ENCODE measurements at regions of chr5 and their contacts with region 1.

Region 1: DNA sequence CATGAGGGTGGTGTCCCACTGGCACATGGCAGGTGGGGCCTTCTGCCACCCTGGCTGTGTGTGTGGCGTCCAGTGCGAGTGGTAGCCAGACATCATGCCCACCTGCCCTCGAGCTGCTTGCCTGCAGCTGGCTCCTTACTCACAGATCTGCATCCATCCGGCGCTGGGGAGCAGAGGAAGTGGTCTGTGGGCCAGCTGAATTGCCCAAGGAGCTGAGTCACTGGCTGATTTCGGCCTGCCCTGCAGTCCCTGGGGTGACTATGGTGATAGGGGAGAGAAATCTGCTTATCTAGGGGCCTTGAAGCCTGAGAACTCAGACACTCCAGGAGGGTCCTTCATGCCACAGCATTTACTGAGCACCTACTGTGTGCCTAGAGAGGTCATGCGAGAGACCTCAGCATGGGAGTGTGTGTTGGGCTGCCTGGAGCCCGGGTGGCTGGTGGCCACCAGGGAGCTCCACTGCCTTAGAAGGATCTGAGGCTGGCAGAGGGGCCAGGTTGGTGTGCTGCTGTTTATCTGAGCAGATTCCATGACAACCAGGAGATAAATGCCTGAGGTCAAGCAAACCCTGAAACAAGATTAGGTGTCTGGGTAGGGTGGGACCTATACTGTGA is 57.1 kb downstream of the SLC22A5 start:
- DNase-seq: peak; percentile 90
- H3K4me3 Mint-ChIP-seq: peak overlapping the region; percentile 77
- H3K27ac Mint-ChIP-seq: peak overlapping the region; percentile 99
- H3K4me1 Mint-ChIP-seq: peaks cover 98% of the 10 kb centered on the region
- H3K27me3 Mint-ChIP-seq: no peaks in the 10 kb centered on the region

Region 2: DNA sequence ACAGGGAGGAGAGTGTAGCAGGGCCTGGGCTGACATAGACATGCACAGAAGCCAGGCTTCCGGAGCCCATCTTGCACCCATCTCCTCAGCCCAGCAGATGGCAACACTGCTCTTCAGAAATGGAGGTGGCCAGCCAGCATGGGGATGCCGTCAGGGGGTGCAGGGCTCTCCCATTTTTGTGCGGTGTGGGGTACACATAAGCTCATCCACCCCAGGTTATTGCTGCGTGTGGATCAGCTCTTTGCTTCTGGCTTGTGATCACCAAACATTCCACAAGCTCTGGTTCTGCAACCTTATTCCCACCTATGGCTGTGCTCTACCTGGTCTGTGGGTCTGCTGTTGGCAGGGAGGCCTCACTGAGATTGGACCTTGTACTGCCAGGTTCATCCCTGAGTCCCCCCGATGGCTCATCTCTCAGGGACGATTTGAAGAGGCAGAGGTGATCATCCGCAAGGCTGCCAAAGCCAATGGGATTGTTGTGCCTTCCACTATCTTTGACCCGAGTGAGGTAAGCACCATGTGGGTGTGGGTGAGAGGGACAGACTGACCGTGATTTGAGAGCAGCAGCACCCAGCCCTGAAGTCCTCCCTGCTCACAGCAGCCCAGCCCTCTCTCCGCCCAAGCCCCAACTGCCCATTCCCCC is 39.9 kb before region 1 on chr5:
- CTCF ChIA-PET with region 1: interaction called, 10 read pairs
- POLR2A ChIA-PET with region 1: interaction called, 4 read pairs
- DNase-seq: peak; percentile 83
- H3K4me3 Mint-ChIP-seq: no peak overlapping the region
- H3K27ac Mint-ChIP-seq: peak overlapping the region; percentile 31
- H3K4me1 Mint-ChIP-seq: peaks cover 52% of the 10 kb centered on the region
- H3K27me3 Mint-ChIP-seq: no peaks in the 10 kb centered on the region

Region 3: DNA sequence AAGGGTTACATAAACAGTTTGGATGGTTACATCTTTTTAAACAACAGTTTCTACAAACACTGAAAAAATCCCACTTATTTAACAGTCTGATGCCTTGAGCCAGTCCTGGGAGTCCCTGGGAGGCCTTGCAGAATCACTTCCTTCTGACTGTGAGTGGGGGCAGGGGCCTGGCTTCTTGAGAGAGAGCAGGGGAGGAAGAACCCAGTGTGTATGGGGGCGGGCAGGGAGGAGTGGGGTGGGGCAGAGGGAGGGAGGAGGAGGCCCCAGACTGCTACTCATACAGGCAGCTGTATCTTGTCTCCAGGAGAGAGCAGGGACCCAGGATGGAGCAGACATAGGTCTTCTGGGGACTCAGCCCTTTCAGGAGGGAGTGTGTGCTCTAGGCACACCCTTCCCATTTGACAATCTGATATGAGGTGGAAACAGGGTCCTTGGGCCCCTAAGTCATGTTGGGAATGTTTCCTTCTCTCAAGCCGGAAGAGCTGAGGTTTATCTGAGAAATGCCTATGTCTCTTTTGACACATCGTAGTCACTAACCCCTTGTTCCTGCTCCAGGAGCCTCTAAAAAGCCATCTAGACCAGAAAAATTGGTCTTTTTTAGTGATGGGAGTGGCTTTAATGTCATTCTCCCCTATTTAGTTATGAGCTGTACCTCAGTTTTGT is 11.1 kb after region 1 on chr5:
- CTCF ChIA-PET with region 1: interaction called, 44 read pairs
- POLR2A ChIA-PET with region 1: interaction called, 76 read pairs
- DNase-seq: peak; percentile 72
- H3K4me3 Mint-ChIP-seq: peak overlapping the region; percentile 54
- H3K27ac Mint-ChIP-seq: peak overlapping the region; percentile 87
- H3K4me1 Mint-ChIP-seq: peaks cover 82% of the 10 kb centered on the region
- H3K27me3 Mint-ChIP-seq: no peaks in the 10 kb centered on the region

Region 4: GRCh38 chr5:132456296-132457001 is 29.8 kb after region 1 on chr5:
- CTCF ChIA-PET with region 1: interaction called, 104 read pairs
- POLR2A ChIA-PET with region 1: interaction called, 296 read pairs
- DNase-seq: peak; percentile 75
- H3K4me3 Mint-ChIP-seq: peak overlapping the region; percentile 53
- H3K27ac Mint-ChIP-seq: peak overlapping the region; percentile 99
- H3K4me1 Mint-ChIP-seq: peaks cover 91% of the 10 kb centered on the region
- H3K27me3 Mint-ChIP-seq: no peaks in the 10 kb centered on the region

Region 5: GRCh38 chr5:132495667-132496190 is 69.1 kb after region 1 on chr5:
- CTCF ChIA-PET with region 1: interaction called, 66 read pairs
- POLR2A ChIA-PET with region 1: interaction called, 1,155 read pairs
- DNase-seq: peak; percentile 82
- H3K4me3 Mint-ChIP-seq: peak overlapping the region; percentile 96
- H3K27ac Mint-ChIP-seq: peak overlapping the region; percentile 91
- H3K4me1 Mint-ChIP-seq: peaks cover 76% of the 10 kb centered on the region
- H3K27me3 Mint-ChIP-seq: no peaks in the 10 kb centered on the region

Measured in activated CD4-positive, alpha-beta memory T cell treated with anti-CD3 and anti-CD28 coated beads, Interleukin-2, amount 10 ng/mL, durations not matched to agents 7 days and 5 days (primary cell).